Activated CD4-positive, alpha-beta memory T cell treated with anti-CD3 and anti-CD28 coated beads for 36 hours (primary cell): ENCODE measurements at regions of chr7 and their contacts with region 1.

Region 1: DNA sequence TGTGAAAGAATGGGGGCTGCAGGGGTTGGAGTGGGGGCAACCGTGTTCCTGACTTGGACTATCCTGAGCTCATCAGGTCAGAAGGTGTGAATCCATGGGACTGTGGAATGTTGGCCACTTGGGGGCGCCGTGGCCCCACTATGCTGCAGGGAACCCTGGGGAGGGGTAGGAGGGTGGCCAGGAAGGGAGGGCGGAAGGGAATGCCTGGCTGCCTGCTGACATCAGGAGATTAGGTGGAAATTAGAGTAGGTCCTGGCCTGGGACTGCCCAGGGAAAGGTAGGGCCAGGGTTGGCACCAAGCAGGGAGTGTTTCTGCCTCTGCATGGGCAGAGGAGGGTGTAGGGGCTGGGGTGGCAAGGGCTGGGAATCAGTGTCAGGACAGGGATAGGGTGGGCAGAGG is 65.8 kb upstream of the PRSS58 start:
- DNase-seq: peak; percentile 75
- H3K4me3 Mint-ChIP-seq: peak overlapping the region; percentile 35
- H3K27ac Mint-ChIP-seq: peak overlapping the region; percentile 43
- H3K4me1 Mint-ChIP-seq: peaks cover 33% of the 10 kb centered on the region
- H3K27me3 Mint-ChIP-seq: peaks cover 6% of the 10 kb centered on the region

Region 2: GRCh38 chr7:142077762-142078161 is 245.9 kb before region 1 on chr7:
- CTCF ChIA-PET with region 1: no interaction called
- POLR2A ChIA-PET with region 1: no interaction called
- intact Hi-C with region 1: no loop called
- DNase-seq: no peak
- H3K4me3 Mint-ChIP-seq: no peak overlapping the region
- H3K27ac Mint-ChIP-seq: no peak overlapping the region
- H3K4me1 Mint-ChIP-seq: no peaks in the 10 kb centered on the region
- H3K27me3 Mint-ChIP-seq: peaks cover 5% of the 10 kb centered on the region

Region 3: DNA sequence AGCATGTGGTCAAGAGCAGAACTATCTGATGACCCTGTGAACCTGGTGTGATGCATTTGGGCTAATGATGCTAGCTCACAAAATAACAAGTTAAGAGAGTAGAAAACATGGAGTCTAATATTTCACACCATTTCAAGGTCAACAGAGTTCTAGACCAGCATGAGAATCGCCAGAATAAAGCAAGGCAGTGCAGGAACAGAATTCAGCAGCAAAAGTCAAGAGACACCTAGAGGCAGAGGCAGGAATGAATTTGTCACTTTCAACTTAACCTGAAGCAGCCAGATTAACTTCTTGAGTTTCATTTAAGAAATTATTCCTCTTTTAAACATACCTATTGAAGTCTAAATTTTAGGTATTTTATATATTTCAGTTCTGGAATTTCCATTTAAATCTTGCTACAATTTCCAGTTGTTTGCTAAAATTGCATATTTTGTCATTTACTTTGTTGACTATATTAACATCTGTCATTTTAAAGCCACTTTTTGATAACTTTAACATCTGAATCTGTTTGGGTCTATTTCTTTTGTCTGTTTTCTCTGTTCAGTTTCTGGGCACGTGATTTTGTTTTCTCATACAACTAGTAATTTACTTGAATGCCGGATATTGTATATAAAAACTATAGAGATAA is 21.7 kb before region 1 on chr7:
- CTCF ChIA-PET with region 1: interaction called, 22 read pairs
- POLR2A ChIA-PET with region 1: no interaction called
- intact Hi-C with region 1: no loop called
- DNase-seq: no peak
- H3K4me3 Mint-ChIP-seq: no peak overlapping the region
- H3K27ac Mint-ChIP-seq: no peak overlapping the region
- H3K4me1 Mint-ChIP-seq: peaks cover 20% of the 10 kb centered on the region
- H3K27me3 Mint-ChIP-seq: peaks cover 10% of the 10 kb centered on the region

Region 4: DNA sequence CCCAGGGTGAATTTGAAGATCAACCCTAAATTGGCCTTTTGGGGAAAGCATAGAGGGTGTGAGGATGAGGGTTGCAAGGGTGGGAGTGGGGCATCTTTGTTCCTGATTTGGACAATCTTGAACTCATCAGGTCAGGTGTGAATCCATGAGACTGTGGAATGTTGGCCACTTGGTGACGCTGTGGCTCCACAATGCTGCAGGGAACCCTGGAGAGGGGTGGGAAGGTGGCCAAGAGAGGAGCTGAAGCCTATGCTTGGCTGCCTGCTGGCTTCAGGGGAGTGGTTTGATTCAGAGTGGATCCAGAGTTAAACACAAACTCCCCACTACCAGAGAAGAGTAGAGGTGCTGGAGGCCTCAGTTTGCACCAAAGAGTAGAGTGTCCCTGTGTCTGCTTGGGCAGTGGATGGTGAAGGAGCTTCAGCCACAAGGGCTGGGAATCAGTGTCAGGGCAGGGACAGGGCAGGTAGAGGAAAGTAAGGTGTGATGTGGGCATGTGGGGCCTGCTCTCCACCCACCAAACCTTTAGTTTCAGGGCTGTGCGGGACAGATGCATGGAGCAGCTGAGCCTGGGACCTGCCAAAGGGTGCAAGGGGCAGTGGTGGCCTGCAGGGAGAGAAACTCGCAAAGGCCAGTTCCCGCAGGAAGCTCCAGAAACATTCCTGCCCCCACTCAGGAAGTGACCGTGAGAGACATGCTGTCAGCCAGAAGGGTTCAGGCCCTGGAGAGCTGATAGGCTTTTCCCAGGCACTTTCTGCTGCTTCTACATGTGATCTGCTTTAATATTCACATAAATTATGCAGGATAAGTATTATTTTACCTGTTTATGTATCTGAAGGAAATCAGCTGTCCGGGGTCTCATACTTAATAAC is 15.2 kb after region 1 on chr7:
- CTCF ChIA-PET with region 1: interaction called, 15 read pairs
- POLR2A ChIA-PET with region 1: no interaction called
- intact Hi-C with region 1: loop called (anchors 2 kb)
- DNase-seq: peak; percentile 56
- H3K4me3 Mint-ChIP-seq: no peak overlapping the region
- H3K27ac Mint-ChIP-seq: peak overlapping the region; percentile 23
- H3K4me1 Mint-ChIP-seq: peaks cover 18% of the 10 kb centered on the region
- H3K27me3 Mint-ChIP-seq: peaks cover 1% of the 10 kb centered on the region

Region 5: GRCh38 chr7:142352543-142352942 is 28.8 kb after region 1 on chr7:
- CTCF ChIA-PET with region 1: interaction called, 13 read pairs
- POLR2A ChIA-PET with region 1: no interaction called
- intact Hi-C with region 1: no loop called
- DNase-seq: peak; percentile 47
- H3K4me3 Mint-ChIP-seq: peak overlapping the region; percentile 74
- H3K27ac Mint-ChIP-seq: peak overlapping the region; percentile 81
- H3K4me1 Mint-ChIP-seq: peaks cover 31% of the 10 kb centered on the region
- H3K27me3 Mint-ChIP-seq: no peaks in the 10 kb centered on the region

Region 6: GRCh38 chr7:142853739-142854371 is 530.1 kb after region 1 on chr7:
- CTCF ChIA-PET with region 1: no interaction called
- POLR2A ChIA-PET with region 1: no interaction called
- intact Hi-C with region 1: loop called (anchors 5 kb)
- DNase-seq: peak; percentile 73
- H3K4me3 Mint-ChIP-seq: peak overlapping the region; percentile 93
- H3K27ac Mint-ChIP-seq: peak overlapping the region; percentile 72
- H3K4me1 Mint-ChIP-seq: peaks cover 16% of the 10 kb centered on the region
- H3K27me3 Mint-ChIP-seq: peaks cover 3% of the 10 kb centered on the region